CD8-positive, alpha-beta memory T cell (primary cell): ENCODE measurements at regions of chr11 and their contacts with region 1.

Region 1: GRCh38 chr11:134223836-134224709 is at the starts of genes NCAPD3 and VPS26B:
- DNase-seq: peak; percentile 94 to 97 (median 95)
- H3K4me3 ChIP-seq: peak within 1 kb of the TSS; percentile 87
- H3K4me3 Mint-ChIP-seq: peak within 1 kb of the TSS; percentile 94 to 99 (median 97)
- H3K27ac ChIP-seq: peak within 1 kb of the TSS; percentile 87
- H3K27ac Mint-ChIP-seq: peak within 1 kb of the TSS; percentile 97 to 99 (median 98)
- H3K4me1 ChIP-seq: peaks cover 40% of the 10 kb centered on the region
- H3K4me1 Mint-ChIP-seq: peaks cover 57 to 70% (median 67%) of the 10 kb centered on the region in 3 donors
- H3K27me3 ChIP-seq: no peaks in the 10 kb centered on the region
- H3K27me3 Mint-ChIP-seq: peaks cover 0 to 5% of the 10 kb centered on the region in 2 donors
- total RNA-seq, gene NCAPD3: 76.7 to 80.4 TPM
- total RNA-seq, gene VPS26B: 36.6 to 36.7 TPM

Region 2: DNA sequence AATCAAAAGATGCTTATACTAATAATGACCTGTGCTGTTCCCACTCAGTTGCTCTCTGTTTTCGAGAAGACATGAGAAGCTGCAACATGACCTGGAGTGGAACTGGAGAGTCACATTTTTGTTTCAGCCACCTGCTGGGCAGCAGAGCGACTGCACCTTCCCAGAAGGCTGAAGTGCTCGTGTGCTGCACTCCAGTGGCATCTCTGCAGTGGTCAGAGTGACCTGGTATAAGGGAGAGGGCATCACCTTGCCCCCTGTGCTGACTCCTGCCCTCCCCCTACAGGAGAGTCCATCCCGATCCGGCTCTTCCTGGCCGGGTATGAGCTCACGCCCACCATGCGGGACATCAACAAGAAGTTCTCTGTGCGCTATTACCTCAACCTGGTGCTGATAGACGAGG is 20.6 kb after region 1 on chr11:
- CTCF ChIA-PET with region 1: interaction called, 24 read pairs
- POLR2A ChIA-PET with region 1: interaction called, 11 read pairs
- DNase-seq: peak in 2 of 5 donors; percentile 22 to 29
- H3K4me3 ChIP-seq: no peak overlapping the region
- H3K4me3 Mint-ChIP-seq: no peak overlapping the region
- H3K27ac ChIP-seq: no peak overlapping the region
- H3K27ac Mint-ChIP-seq: peak overlapping the region in 3 of 8 donors; percentile 51 to 73 (median 66)
- H3K4me1 ChIP-seq: no peaks in the 10 kb centered on the region
- H3K4me1 Mint-ChIP-seq: peaks cover 0 to 4% (median 0%) of the 10 kb centered on the region in 3 donors
- H3K27me3 ChIP-seq: no peaks in the 10 kb centered on the region
- H3K27me3 Mint-ChIP-seq: no peaks in the 10 kb centered on the region

Region 3: DNA sequence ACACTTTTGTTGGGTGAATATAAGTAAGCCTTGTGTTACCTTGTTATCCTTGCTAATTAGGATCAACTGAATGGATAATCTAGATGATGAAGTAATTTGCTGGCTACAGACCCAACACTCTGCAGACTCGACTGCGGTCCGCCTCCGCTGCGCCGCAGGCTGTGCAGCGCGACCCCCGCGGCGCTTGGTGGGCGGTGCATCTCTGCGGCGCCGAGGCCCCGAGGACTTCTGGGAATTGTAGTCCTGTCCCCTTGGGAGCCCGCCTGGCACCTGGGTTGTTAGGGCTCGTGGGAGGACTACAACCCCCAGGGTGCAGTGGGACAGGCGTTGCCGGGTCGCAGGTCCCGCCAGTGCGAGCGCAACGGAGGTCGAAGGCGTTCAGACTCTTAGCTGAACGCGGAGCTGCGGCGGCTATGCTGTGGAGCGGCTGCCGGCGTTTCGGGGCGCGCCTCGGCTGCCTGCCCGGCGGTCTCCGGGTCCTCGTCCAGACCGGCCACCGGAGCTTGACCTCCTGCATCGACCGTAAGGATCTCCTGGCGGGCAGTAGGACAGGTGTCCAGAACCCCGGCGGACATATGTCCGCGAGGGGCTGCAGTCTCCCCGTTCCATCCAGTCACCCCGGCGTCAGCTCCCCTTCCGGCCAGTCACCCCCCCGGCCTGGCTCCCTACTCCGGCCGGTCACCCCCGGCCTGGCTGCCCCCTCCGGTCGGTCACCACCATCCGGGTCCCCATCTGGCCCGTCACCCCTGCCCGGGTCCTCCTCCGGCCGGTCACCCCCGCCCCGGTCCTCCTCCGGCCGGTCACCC is 29.3 kb after region 1 on chr11 and contains the starts of genes ACAD8 and THYN1:
- CTCF ChIA-PET with region 1: interaction called, 9 read pairs
- POLR2A ChIA-PET with region 1: interaction called, 36 read pairs
- DNase-seq: peak; percentile 94 to 98 (median 95)
- H3K4me3 ChIP-seq: peak within 1 kb of the TSS; percentile 91
- H3K4me3 Mint-ChIP-seq: peak within 1 kb of the TSS; percentile 88 to 99 (median 96)
- H3K27ac ChIP-seq: peak within 1 kb of the TSS; percentile 53
- H3K27ac Mint-ChIP-seq: peak within 1 kb of the TSS; percentile 76 to 97 (median 90)
- H3K4me1 ChIP-seq: peaks cover 25% of the 10 kb centered on the region
- H3K4me1 Mint-ChIP-seq: peaks cover 30 to 47% (median 40%) of the 10 kb centered on the region in 3 donors
- H3K27me3 ChIP-seq: no peaks in the 10 kb centered on the region
- H3K27me3 Mint-ChIP-seq: no peaks in the 10 kb centered on the region
- total RNA-seq, gene ACAD8: 27.1 to 28.2 TPM
- total RNA-seq, gene THYN1: 58.9 to 68.4 TPM